Endothelial cell of umbilical vein (primary cell): ENCODE measurements at regions of chr2 and their contacts with region 1.

Region 1: DNA sequence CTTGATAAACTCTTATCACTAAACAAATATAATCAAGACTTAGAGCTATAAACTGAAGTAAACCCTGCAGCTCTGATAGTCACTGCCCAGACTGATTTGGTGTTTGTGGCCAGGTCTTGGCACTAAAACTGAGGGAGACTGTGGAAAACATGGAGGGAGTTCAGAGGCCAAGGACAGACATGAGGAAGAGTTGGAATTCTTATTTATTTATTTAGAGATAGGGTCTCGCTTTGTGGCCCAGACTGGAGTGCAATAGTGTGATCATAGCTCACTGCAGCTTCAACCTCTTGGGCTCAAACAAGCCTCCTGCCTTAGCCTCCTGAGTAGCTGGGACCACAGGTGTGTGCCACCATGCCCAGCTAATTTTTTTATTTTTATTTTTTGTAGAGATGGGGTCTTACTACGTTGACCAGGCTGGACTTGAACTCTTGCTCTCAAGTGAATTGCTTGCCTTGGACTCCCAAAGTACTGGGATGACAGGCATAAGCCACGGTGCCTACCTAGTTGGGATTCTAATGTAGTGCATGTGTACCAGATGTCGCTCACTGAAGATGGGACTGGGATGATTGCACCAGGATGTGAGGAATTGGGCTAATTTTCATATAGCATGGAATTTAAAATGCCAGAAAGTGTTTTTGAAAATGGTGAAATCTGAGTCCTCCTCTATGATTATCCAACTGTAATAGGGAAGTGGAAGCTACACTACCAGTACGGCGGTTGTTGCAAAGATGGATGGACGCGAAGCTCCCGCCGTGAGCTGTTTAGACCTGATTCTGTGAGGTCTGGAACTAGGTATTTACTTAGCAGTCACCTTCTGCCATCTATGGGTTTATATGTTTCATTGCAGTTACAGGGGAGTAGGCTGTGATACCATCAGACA is 52.7 kb upstream of the CTLA4 start:
- DNase-seq: peak; percentile 78
- H3K4me3 ChIP-seq: no peak overlapping the region
- H3K27ac ChIP-seq: no peak overlapping the region
- H3K4me1 ChIP-seq: peaks cover 38% of the 10 kb centered on the region
- H3K27me3 ChIP-seq: peaks cover 3 to 5% of the 10 kb centered on the region in 2 experiments
- CTCF ChIP-seq: peak; percentile 52 to 68
- POLR2A ChIP-seq: no peak

Region 2: GRCh38 chr2:202577250-202578183 is 1237.4 kb before region 1 on chr2:
- CTCF ChIA-PET with region 1: interaction called, 5 read pairs
- POLR2A ChIA-PET with region 1: no interaction called
- dilution Hi-C with region 1: no loop called
- intact Hi-C with region 1: loop called (anchors 5 kb)
- DNase-seq: no peak
- H3K4me3 ChIP-seq: no peak overlapping the region
- H3K27ac ChIP-seq: no peak overlapping the region
- H3K4me1 ChIP-seq: no peaks in the 10 kb centered on the region
- H3K27me3 ChIP-seq: no peaks in the 10 kb centered on the region
- CTCF ChIP-seq: no peak
- POLR2A ChIP-seq: no peak

Region 3: GRCh38 chr2:202870431-202871299 is 944.2 kb before region 1 on chr2:
- CTCF ChIA-PET with region 1: interaction called, 6 read pairs
- POLR2A ChIA-PET with region 1: no interaction called
- dilution Hi-C with region 1: no loop called
- intact Hi-C with region 1: loop called (anchors 5 kb)
- DNase-seq: peak; percentile 81
- H3K4me3 ChIP-seq: peak overlapping the region; percentile 56 to 68 (median 65)
- H3K27ac ChIP-seq: peak overlapping the region; percentile 2
- H3K4me1 ChIP-seq: peaks cover 6% of the 10 kb centered on the region
- H3K27me3 ChIP-seq: no peaks in the 10 kb centered on the region
- CTCF ChIP-seq: peak; percentile 58 to 63
- POLR2A ChIP-seq: no peak

Region 4: DNA sequence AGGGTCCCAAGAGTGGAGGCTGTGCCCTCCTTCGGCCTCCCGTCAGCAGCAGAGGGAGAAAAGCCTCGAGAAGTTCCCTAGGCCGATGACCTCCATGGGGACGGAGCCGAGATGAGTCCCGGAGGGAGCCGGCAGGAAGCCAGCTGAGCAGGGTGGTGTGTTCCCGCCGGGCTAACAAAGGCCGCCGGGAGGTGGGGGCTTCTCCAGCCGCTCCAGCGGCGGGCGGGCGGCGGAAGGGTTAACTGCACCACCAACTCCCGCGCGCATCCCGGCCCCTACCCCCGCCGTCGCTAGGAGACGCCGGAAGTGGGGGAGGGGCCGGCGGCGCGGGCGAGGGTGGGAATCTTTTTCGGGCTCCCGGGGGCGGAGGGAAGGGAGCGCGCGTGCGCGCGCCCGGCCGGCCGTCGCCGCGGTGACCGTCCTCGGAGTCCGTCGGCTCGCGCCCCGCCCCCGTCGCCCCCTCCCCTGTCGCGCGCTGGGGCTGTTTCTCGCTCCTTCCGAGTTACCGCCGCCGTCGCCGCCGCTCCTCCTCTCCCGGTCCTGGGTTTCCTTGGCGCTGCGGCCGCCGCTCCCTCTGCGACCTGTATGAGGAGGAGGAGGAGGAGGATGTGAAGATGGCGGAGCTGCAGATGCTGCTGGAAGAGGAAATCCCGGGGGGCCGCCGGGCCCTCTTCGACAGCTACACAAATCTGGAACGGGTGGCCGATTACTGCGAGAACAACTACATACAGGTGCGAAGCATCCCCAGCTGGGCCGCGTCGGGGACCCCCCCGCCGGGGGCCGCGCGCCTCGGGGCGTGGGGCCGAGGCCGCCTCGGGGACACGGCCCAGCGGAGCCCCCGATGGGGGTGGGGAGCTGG is 486.8 kb before region 1 on chr2 and contains the start of gene ABI2:
- CTCF ChIA-PET with region 1: interaction called, 3 read pairs
- POLR2A ChIA-PET with region 1: no interaction called
- dilution Hi-C with region 1: no loop called
- intact Hi-C with region 1: loop called (anchors 5 kb)
- DNase-seq: peak; percentile 81
- H3K4me3 ChIP-seq: peak within 1 kb of the TSS; percentile 97 to 100 (median 99)
- H3K27ac ChIP-seq: peak within 1 kb of the TSS; percentile 79
- H3K4me1 ChIP-seq: peaks cover 19% of the 10 kb centered on the region
- H3K27me3 ChIP-seq: no peaks in the 10 kb centered on the region
- CTCF ChIP-seq: no peak
- POLR2A ChIP-seq: peak; percentile 81
- total RNA-seq, gene ABI2: 61.0 and 74.4 TPM in 2 replicates

Region 5: DNA sequence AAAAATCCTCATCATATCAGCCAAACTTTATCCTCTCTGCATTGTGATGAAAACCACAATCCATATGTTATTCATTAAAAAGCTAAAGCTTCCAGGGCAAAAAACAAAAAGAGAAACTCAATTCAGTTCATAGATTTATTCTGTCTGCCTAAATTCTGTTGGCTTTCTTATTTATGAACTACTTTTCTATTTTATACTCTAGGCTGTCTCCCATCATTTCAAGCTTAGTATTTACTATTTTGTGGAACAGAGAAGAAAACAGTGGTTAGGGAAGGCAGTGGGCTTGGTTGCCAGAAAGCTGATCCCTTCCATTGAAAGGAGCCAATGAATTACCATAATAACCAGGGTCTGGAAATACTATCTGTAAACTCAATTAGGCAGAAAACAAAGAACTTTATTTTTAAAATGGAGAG is 351.6 kb before region 1 on chr2:
- CTCF ChIA-PET with region 1: interaction called, 19 read pairs
- POLR2A ChIA-PET with region 1: no interaction called
- dilution Hi-C with region 1: no loop called
- intact Hi-C with region 1: no loop called
- DNase-seq: no peak
- H3K4me3 ChIP-seq: no peak overlapping the region
- H3K27ac ChIP-seq: no peak overlapping the region
- H3K4me1 ChIP-seq: no peaks in the 10 kb centered on the region
- H3K27me3 ChIP-seq: no peaks in the 10 kb centered on the region
- CTCF ChIP-seq: no peak
- POLR2A ChIP-seq: no peak

Region 6: DNA sequence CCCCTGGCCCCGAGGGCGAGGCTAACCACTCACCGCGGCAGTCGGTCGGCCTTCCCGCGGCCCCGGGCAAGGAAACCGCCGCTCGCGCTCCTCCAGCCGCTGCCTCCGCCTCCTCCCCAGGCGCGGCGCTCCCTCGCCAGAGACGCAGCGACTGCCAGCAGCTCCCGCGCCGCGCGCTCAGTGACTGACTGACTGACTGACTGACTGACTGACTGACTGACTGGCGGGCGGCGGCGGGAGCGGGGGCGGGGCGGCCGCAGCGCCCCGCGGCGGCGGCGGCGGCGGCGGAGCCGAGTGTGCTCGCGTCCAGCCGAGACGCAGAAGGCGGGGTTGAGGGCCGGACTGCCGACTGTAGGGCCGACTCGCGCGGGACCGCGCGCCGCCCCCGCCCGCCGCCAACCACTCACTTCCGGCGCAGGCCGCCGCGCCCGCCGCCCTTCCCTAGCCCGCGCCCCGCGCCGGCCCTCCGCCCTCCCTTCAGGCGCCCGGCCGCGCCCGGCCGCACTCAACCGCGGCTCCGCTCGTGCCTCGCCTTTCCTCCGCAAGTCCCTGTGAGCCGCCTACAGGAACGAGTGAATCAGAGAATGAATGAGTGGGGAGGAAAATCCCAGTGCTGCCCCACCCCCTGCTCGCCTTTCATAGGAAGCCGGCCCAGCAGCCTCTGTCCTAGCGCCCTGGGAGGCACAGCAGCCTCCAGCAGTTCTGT is 279.7 kb before region 1 on chr2 and contains the start of gene RAPH1:
- CTCF ChIA-PET with region 1: interaction called, 18 read pairs
- POLR2A ChIA-PET with region 1: no interaction called
- dilution Hi-C with region 1: no loop called
- intact Hi-C with region 1: loop called (anchors 1 kb)
- DNase-seq: peak; percentile 85
- H3K4me3 ChIP-seq: peak within 1 kb of the TSS; percentile 93 to 100 (median 98)
- H3K27ac ChIP-seq: peak within 1 kb of the TSS; percentile 81
- H3K4me1 ChIP-seq: peaks cover 18% of the 10 kb centered on the region
- H3K27me3 ChIP-seq: no peaks in the 10 kb centered on the region
- CTCF ChIP-seq: no peak
- POLR2A ChIP-seq: peak; percentile 86
- total RNA-seq, gene RAPH1: 56.9 and 59.5 TPM in 2 replicates

Region 7: DNA sequence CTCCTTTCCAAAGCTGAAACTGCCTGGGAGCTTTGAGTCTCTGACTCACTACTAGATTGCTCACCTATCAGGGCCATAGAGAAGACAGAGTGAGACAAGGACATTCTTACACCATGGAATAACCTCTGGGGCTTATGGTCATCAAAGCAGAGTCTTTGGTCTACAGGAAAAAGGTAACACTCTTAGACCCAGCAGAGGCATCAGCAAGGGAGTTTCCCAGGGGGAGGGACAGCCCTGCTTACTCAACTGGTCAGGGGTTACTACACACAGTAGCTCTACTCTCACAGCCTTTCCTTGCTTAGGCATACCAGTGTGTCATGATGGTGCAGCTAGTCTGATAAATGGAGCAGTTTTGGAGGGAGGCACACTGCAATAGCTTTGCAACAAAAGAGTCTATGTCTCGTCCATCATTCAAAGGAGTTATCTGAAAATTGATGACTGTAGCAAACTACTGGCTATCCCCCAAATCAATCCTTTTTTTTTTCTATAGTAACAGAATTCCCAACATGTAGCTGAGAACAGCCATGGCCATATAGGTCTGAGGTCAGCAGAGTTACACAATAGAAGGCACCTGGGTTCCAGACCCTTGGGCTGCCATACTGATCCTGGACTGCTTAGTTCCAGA is 130.9 kb before region 1 on chr2:
- CTCF ChIA-PET with region 1: interaction called, 25 read pairs
- POLR2A ChIA-PET with region 1: interaction called, 5 read pairs
- dilution Hi-C with region 1: no loop called
- intact Hi-C with region 1: loop called (anchors 1 kb)
- DNase-seq: peak; percentile 90
- H3K4me3 ChIP-seq: no peak overlapping the region
- H3K27ac ChIP-seq: peak overlapping the region; percentile 98
- H3K4me1 ChIP-seq: peaks cover 52% of the 10 kb centered on the region
- H3K27me3 ChIP-seq: no peaks in the 10 kb centered on the region
- CTCF ChIP-seq: no peak
- POLR2A ChIP-seq: no peak

Region 8: GRCh38 chr2:203853271-203853670 is 38.4 kb after region 1 on chr2:
- CTCF ChIA-PET with region 1: no interaction called
- POLR2A ChIA-PET with region 1: no interaction called
- dilution Hi-C with region 1: no loop called
- intact Hi-C with region 1: no loop called
- DNase-seq: no peak
- H3K4me3 ChIP-seq: no peak overlapping the region
- H3K27ac ChIP-seq: no peak overlapping the region
- H3K4me1 ChIP-seq: no peaks in the 10 kb centered on the region
- H3K27me3 ChIP-seq: peaks cover 3 to 9% of the 10 kb centered on the region in 2 experiments
- CTCF ChIP-seq: no peak
- POLR2A ChIP-seq: no peak